ENCODE measurements at regions of chr11 and their contacts with region 1.

Region 1: GRCh38 chr11:765025-765801 is 12.1 kb downstream of the GATD1 start:
- DNase-seq: peak; percentile 55 to 83 (median 66)
- ATAC-seq: peak; percentile 95
- H3K4me3 ChIP-seq: no peak overlapping the region
- H3K4me3 Mint-ChIP-seq: no peak overlapping the region
- H3K27ac ChIP-seq: no peak overlapping the region
- H3K27ac Mint-ChIP-seq: no peak overlapping the region
- H3K4me1 ChIP-seq: peaks cover 4% of the 10 kb centered on the region
- H3K4me1 Mint-ChIP-seq: no peaks in the 10 kb centered on the region
- H3K27me3 ChIP-seq: no peaks in the 10 kb centered on the region
- H3K27me3 Mint-ChIP-seq: no peaks in the 10 kb centered on the region
- CTCF ChIP-seq: peak; percentile 66

Region 2: DNA sequence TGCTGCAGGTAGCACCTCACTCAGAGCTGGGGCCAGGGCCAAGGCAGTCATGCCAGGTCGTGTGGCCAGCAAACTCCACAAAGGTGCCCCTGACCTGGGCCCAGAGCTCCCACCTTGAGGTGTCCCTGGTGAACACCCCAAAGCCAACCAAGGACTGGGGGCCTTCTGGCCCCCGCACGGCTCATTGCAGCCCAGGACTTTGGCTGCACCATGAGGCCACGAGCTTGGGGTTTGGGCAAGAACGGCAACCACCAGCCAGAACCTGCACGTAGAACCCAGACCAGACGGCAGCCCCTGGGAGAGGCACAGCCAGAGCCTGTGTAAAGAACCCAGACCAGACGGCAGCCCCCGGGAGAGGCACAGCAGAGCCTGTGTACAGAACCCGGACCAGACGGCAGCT is 220.0 kb before region 1 on chr11:
- CTCF ChIA-PET with region 1: no interaction called
- POLR2A ChIA-PET with region 1: no interaction called
- intact Hi-C with region 1: no loop called
- DNase-seq: no peak
- ATAC-seq: no peak
- H3K4me3 ChIP-seq: no peak overlapping the region
- H3K4me3 Mint-ChIP-seq: no peak overlapping the region
- H3K27ac ChIP-seq: no peak overlapping the region
- H3K27ac Mint-ChIP-seq: no peak overlapping the region
- H3K4me1 ChIP-seq: no peaks in the 10 kb centered on the region
- H3K4me1 Mint-ChIP-seq: no peaks in the 10 kb centered on the region
- H3K27me3 ChIP-seq: no peaks in the 10 kb centered on the region
- H3K27me3 Mint-ChIP-seq: no peaks in the 10 kb centered on the region
- CTCF ChIP-seq: no peak

Region 3: GRCh38 chr11:662689-663274 is 102.4 kb before region 1 on chr11:
- CTCF ChIA-PET with region 1: no interaction called
- POLR2A ChIA-PET with region 1: no interaction called
- intact Hi-C with region 1: loop called (anchors 1 kb)
- DNase-seq: peak in 11 of 14 experiments; percentile 17 to 68 (median 32)
- ATAC-seq: peak; percentile 66
- H3K4me3 ChIP-seq: no peak overlapping the region
- H3K4me3 Mint-ChIP-seq: no peak overlapping the region
- H3K27ac ChIP-seq: no peak overlapping the region
- H3K27ac Mint-ChIP-seq: no peak overlapping the region
- H3K4me1 ChIP-seq: no peaks in the 10 kb centered on the region
- H3K4me1 Mint-ChIP-seq: no peaks in the 10 kb centered on the region
- H3K27me3 ChIP-seq: no peaks in the 10 kb centered on the region
- H3K27me3 Mint-ChIP-seq: no peaks in the 10 kb centered on the region
- CTCF ChIP-seq: peak; percentile 76

Measured in CD4-positive, alpha-beta T cell (primary cell).